Left cardiac atrium (tissue), 4 donors: ENCODE measurements at regions of chr11 and their contacts with region 1.

Region 1: GRCh38 chr11:83724008-83724461 is 437.9 kb upstream of the CCDC90B start:
- DNase-seq: peak; percentile 29
- ATAC-seq: peak; percentile 83 to 88

Region 2: GRCh38 chr11:83292709-83293456 is 431.2 kb before region 1 on chr11:
- intact Hi-C with region 1: loop called (anchors 5 to 10 kb)
- DNase-seq: no peak
- ATAC-seq: peak; percentile 67 to 80

Region 3: GRCh38 chr11:83521647-83522596 is 202.1 kb before region 1 on chr11:
- intact Hi-C with region 1: loop called in 1 of 2 experiments (anchors 5 kb)
- DNase-seq: no peak
- ATAC-seq: peak in 1 of 2 donors; percentile 47